HCT116 (cell line): ENCODE measurements at regions of chr12 and their contacts with region 1.

Region 1: GRCh38 chr12:6965026-6965661 is 5.3 kb downstream of the PHB2 start:
- DNase-seq: peak; percentile 79
- ATAC-seq: peak; percentile 31
- H3K4me3 ChIP-seq: peak overlapping the region; percentile 96 to 99
- H3K27ac ChIP-seq: peak overlapping the region; percentile 97
- H3K4me1 ChIP-seq: peaks cover 39 to 79% of the 10 kb centered on the region in 2 experiments
- H3K27me3 ChIP-seq: no peaks in the 10 kb centered on the region
- CTCF ChIP-seq: peak in 2 of 3 experiments; percentile 92 to 96; a peak in 4 of 6 replicates
- POLR2A ChIP-seq: peak; percentile 56
- RAD21 ChIP-seq: no peak

Region 2: DNA sequence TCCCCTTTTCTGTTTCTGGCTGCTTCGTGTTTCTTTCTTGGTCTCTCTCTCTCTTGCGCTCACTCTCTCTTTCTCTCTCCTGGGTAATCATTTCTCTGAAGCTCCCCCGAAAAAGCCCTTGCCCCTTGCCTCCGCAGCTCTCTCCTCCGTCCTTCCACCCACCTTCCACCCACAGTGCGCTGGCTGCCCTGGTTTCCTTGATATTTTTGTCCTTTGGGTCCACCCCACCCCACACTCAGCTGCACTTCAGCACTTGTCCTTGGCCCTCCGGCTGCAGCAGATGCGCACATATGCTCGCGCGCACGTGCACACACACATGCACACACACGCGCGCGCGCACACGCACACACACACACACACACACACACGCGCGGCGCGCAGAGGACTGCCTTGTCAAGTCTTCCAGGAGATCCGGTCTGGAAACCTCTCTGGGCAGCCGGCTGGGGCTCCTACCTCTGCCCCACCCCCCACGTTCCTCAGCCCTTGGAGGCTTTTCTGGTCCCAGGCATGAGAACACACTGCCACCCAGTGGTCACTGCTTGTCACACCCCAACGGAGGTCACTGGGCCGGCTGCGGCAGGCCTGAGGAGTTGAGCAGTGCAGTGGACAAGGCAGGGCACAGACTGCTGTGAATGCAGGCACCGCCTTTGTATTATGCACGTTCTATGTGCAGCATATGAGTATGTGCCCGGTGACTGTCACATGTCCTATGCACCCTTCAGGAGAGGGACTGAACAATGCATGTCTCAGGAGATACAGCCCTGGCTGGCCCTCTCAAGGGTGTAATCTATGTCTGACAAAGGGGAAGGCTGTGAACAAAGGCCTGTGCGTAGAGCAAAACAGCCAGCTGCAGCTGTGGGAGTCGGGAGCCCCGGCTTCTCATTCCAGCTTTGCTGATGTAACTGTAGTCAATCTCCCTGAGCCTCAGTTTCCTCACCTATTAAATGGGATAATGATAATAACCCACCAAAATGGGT is 186.3 kb before region 1 on chr12:
- CTCF ChIA-PET with region 1: no interaction called
- POLR2A ChIA-PET with region 1: no interaction called
- RAD21 ChIA-PET with region 1: no interaction called
- intact Hi-C with region 1: no loop called
- DNase-seq: peak; percentile 81
- ATAC-seq: peak; percentile 98
- H3K4me3 ChIP-seq: peak overlapping the region in 1 of 2 experiments; percentile 32; a peak in 1 of 4 replicates
- H3K27ac ChIP-seq: peak overlapping the region; percentile 51
- H3K4me1 ChIP-seq: peaks cover 11 to 14% of the 10 kb centered on the region in 2 experiments; a peak in 3 of 4 replicates
- H3K27me3 ChIP-seq: no peaks in the 10 kb centered on the region
- CTCF ChIP-seq: peak; percentile 95
- POLR2A ChIP-seq: no peak
- RAD21 ChIP-seq: peak; percentile 99

Region 3: GRCh38 chr12:6873094-6874014 is 91.8 kb before region 1 on chr12 and contains the start of gene SPSB2:
- CTCF ChIA-PET with region 1: interaction called, 18 read pairs
- POLR2A ChIA-PET with region 1: interaction called, 33 read pairs
- RAD21 ChIA-PET with region 1: no interaction called
- intact Hi-C with region 1: loop called (anchors 1 kb)
- DNase-seq: peak; percentile 89
- ATAC-seq: peak; percentile 79
- H3K4me3 ChIP-seq: peak within 1 kb of the TSS; percentile 73 to 92
- H3K27ac ChIP-seq: peak within 1 kb of the TSS; percentile 96
- H3K4me1 ChIP-seq: peaks cover 23 to 50% of the 10 kb centered on the region in 2 experiments
- H3K27me3 ChIP-seq: no peaks in the 10 kb centered on the region
- CTCF ChIP-seq: no peak
- POLR2A ChIP-seq: peak; percentile 35
- RAD21 ChIP-seq: no peak
- total RNA-seq, gene SPSB2: 10.0 TPM

Region 4: GRCh38 chr12:7018350-7019042 is 53.4 kb after region 1 on chr12 and contains the start of gene LPCAT3:
- CTCF ChIA-PET with region 1: interaction called, 3 read pairs
- POLR2A ChIA-PET with region 1: interaction called, 5 read pairs
- RAD21 ChIA-PET with region 1: no interaction called
- intact Hi-C with region 1: loop called (anchors 2 kb)
- DNase-seq: peak; percentile 90
- ATAC-seq: peak; percentile 92
- H3K4me3 ChIP-seq: peak within 1 kb of the TSS; percentile 89 to 96
- H3K27ac ChIP-seq: peak within 1 kb of the TSS; percentile 93
- H3K4me1 ChIP-seq: peaks cover 14 to 32% of the 10 kb centered on the region in 2 experiments
- H3K27me3 ChIP-seq: no peaks in the 10 kb centered on the region
- CTCF ChIP-seq: peak; percentile 65 to 74 (median 69)
- POLR2A ChIP-seq: no peak
- RAD21 ChIP-seq: peak; percentile 70
- total RNA-seq, gene LPCAT3: 45.8 TPM

Region 5: DNA sequence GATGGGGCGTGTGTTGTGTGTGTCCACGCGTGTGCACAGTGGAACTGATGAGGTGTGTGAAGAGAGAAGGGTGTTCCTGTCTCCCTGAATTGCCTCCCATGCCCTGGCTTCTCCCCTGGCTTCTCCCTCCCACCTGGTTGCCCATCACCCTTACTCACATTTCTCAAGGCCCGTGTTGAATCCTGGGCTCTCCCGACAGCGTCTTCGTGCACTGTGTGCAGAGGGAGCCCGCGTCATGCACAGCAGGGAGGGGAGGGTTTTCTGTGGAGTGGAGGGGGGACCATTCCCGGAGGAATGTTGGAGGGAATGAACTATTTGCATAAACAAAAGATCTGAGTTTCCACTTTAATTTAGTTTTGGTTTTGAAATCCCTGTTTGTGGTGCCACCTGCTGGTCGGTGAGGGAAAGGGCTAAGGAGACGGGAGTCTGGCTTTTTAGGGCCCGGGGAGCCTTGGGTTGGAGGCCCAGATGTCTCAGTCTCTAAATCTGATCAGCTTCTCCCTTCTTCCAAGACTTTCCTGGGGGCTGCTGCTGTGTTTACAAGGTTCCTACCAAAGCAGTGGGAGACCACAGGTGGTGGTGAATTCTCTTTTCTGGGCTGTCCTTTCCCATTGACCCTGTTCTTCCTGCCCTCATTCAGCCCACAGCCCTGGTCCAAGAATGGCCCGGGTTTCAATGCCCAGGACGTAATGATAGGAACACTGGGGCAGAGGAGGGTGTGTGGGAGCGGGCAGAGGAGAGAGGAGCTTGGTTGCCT is 127.3 kb after region 1 on chr12 and contains the start of gene C1R:
- CTCF ChIA-PET with region 1: no interaction called
- POLR2A ChIA-PET with region 1: interaction called, 3 read pairs
- RAD21 ChIA-PET with region 1: no interaction called
- intact Hi-C with region 1: loop called (anchors 5 kb)
- DNase-seq: no peak
- ATAC-seq: peak; percentile 85
- H3K4me3 ChIP-seq: no peak within 1 kb of the TSS
- H3K27ac ChIP-seq: peak within 1 kb of the TSS; percentile 13; the same call in 1 of the 2 replicates
- H3K4me1 ChIP-seq: peaks cover 0 to 6% of the 10 kb centered on the region in 2 experiments; a peak in 1 of 4 replicates
- H3K27me3 ChIP-seq: 0 out of 2 replicates have a peak, but pooled peaks cover 2% of the 10 kb centered on the region
- CTCF ChIP-seq: peak; percentile 84 to 89 (median 87)
- POLR2A ChIP-seq: no peak
- RAD21 ChIP-seq: peak; percentile 84
- total RNA-seq, gene C1R: 4.3 TPM